Activated CD4-positive, alpha-beta T cell treated with anti-CD3 and anti-CD28 coated beads for 36 hours (primary cell): ENCODE measurements at regions of chr2 and their contacts with region 1.

Region 1: GRCh38 chr2:69914170-69914960 is 544 bp upstream of the MXD1 start:
- DNase-seq: peak; percentile 100
- ATAC-seq: peak; percentile 96
- H3K4me3 Mint-ChIP-seq: peak overlapping the region; percentile 81
- H3K27ac Mint-ChIP-seq: peak overlapping the region; percentile 89
- H3K4me1 Mint-ChIP-seq: peaks cover 35% of the 10 kb centered on the region
- H3K27me3 Mint-ChIP-seq: no peaks in the 10 kb centered on the region

Region 2: DNA sequence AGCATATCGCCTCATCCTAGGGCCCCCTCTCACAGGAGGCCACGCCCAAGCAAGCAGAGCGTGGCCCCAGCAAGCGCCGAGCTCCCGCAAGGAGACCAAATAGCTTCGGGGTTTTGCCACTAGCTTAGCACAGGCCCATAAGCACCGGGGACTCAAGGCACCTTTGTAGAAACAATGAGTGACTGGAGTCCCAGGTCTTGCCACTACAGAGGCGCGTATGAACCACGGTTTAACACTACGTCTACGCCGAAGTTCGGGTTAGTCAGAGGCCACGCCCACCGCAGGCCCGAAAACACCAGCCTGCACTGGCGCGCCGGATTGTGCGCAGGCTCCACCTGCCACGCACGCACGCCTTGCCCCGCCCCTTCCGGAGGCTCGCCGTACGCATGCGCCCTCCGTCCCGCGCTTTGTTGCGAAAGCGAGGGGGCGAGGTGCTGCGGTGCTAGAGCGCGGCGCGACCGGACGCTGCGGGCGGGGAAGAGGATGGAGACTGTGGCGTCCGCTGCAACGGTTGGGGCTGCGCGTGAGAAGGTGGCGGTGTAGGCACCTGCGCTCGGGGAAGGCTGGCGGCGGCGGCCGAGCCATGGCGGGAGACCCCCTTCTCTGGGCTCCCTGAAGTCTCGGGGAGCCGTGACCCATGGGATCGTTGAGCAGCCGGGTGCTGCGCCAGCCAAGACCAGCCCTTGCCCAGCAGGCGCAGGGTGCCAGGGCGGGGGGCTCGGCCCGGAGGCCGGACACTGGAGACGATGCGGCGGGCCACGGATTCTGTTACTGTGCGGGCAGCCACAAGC is 84.9 kb before region 1 on chr2 and contains the start of gene GMCL1:
- CTCF ChIA-PET with region 1: interaction called, 3 read pairs
- POLR2A ChIA-PET with region 1: no interaction called
- intact Hi-C with region 1: loop called in 1 of 2 experiments (anchors 1 kb)
- DNase-seq: peak; percentile 99
- ATAC-seq: peak; percentile 96
- H3K4me3 Mint-ChIP-seq: peak within 1 kb of the TSS; percentile 83
- H3K27ac Mint-ChIP-seq: peak within 1 kb of the TSS; percentile 94
- H3K4me1 Mint-ChIP-seq: peaks cover 49% of the 10 kb centered on the region
- H3K27me3 Mint-ChIP-seq: no peaks in the 10 kb centered on the region
- total RNA-seq, gene GMCL1: 14.5 to 20.3 TPM

Region 3: GRCh38 chr2:69847089-69847828 is 67.1 kb before region 1 on chr2:
- CTCF ChIA-PET with region 1: no interaction called
- POLR2A ChIA-PET with region 1: no interaction called
- intact Hi-C with region 1: no loop called
- DNase-seq: no peak
- ATAC-seq: no peak
- H3K4me3 Mint-ChIP-seq: no peak overlapping the region
- H3K27ac Mint-ChIP-seq: no peak overlapping the region
- H3K4me1 Mint-ChIP-seq: peaks cover 6% of the 10 kb centered on the region
- H3K27me3 Mint-ChIP-seq: no peaks in the 10 kb centered on the region

Region 4: GRCh38 chr2:70070541-70071268 is 156.3 kb after region 1 on chr2:
- CTCF ChIA-PET with region 1: interaction called, 44 read pairs
- POLR2A ChIA-PET with region 1: interaction called, 22 read pairs
- intact Hi-C with region 1: loop called (anchors 1 kb)
- DNase-seq: peak; percentile 73
- ATAC-seq: peak; percentile 60
- H3K4me3 Mint-ChIP-seq: peak overlapping the region; percentile 48
- H3K27ac Mint-ChIP-seq: peak overlapping the region; percentile 94
- H3K4me1 Mint-ChIP-seq: peaks cover 51% of the 10 kb centered on the region
- H3K27me3 Mint-ChIP-seq: no peaks in the 10 kb centered on the region

Region 5: DNA sequence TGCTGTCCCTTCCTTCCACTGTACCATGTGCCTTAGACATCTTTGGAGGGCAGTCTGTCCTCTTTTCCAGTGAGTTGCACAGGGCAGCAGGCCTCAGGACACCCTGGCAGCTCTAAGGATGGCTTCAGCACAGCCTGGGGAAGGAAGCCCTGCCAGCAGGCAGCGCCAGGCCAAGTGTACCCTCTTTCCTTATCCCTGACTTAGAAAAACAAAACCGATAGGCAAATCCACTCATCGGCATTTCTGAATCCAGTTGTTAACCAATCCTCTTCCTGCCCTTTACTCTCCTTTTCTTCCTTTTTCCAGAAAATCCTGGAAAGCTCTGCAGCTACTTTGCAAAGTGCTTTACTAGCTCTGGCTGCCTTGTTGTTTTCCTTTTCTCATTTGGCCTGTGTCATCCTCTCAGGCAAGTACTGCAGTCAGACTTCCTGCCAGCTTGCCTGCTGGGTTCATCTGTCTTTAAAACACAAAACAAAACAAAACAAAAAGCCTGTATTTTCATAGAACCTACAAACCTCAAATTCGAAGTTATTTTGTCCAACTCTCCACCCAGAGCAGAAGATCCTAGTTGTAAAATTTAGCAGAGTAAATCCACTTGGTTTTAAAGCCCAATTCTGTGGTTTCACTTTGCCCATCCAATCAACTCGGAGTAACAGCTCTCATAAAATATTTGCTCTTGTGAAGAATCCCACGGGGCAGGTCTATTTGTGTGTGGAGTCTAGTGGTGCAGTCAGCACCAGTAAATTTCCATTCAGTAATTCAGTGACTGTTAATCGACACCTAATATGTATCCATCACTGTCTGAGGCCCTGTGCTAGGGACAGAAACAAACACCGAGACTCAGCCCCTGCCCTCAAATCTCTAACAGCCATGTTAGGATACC is 218.1 kb after region 1 on chr2:
- CTCF ChIA-PET with region 1: interaction called, 25 read pairs
- POLR2A ChIA-PET with region 1: interaction called, 22 read pairs
- intact Hi-C with region 1: no loop called
- DNase-seq: peak; percentile 59
- ATAC-seq: peak; percentile 34
- H3K4me3 Mint-ChIP-seq: peak overlapping the region; percentile 86
- H3K27ac Mint-ChIP-seq: peak overlapping the region; percentile 100
- H3K4me1 Mint-ChIP-seq: peaks cover 74% of the 10 kb centered on the region
- H3K27me3 Mint-ChIP-seq: no peaks in the 10 kb centered on the region

Region 6: DNA sequence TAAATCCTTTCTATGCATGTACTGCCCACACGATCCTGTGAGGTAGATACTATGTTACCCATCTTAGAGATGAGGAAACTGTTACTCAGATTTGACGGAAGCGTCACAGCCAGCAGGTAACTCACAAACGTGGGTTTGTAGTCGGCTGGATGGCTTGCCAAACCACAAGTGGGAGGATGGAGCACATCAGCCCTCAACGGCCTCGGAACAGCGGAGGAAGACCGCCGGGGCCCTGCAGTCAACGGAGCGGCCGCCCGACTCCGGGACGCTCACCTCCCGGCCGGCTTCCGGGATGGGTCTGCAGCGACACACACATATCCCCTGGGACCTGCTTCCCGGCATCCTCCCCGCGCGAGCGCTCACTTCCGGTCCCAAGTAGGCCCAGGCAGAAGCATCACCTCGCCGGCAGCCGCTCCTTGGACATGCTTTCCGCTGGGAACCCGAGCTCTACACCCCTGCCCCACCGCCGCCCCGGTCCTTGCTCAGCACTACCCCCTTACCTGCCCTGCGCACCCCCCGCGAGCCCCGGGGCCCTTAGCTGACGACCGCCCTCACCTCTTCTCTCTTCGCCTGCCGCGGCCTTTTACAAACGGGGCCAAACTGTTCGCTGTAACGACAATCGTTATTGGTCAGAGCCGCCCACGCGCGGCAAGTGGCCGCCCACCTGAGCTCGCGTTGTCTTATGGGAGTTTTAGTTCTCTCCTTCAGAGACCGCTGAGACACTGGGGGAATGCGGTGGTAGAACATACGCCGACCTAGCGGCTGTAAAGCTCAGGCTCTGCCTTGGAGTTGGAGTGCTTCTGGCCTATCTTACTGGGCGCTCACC is 276.3 kb after region 1 on chr2 and contains the start of gene C2orf42:
- CTCF ChIA-PET with region 1: interaction called, 15 read pairs
- POLR2A ChIA-PET with region 1: interaction called, 30 read pairs
- intact Hi-C with region 1: loop called (anchors 1 kb)
- DNase-seq: peak; percentile 98
- ATAC-seq: peak; percentile 91
- H3K4me3 Mint-ChIP-seq: peak within 1 kb of the TSS; percentile 84
- H3K27ac Mint-ChIP-seq: peak within 1 kb of the TSS; percentile 97
- H3K4me1 Mint-ChIP-seq: peaks cover 16% of the 10 kb centered on the region
- H3K27me3 Mint-ChIP-seq: no peaks in the 10 kb centered on the region
- total RNA-seq, gene C2orf42: 22.6 to 23.3 TPM